Activated naive CD4-positive, alpha-beta T cell treated with anti-CD3 and anti-CD28 coated beads, Interleukin-2, amount 10 ng/mL, durations not matched to agents 7 days and 5 days (primary cell): ENCODE measurements at regions of chr12 and their contacts with region 1.

Region 1: GRCh38 chr12:94101738-94102660 is 46.4 kb upstream of the PLXNC1 start:
- DNase-seq: peak; percentile 92
- H3K4me3 Mint-ChIP-seq: peak overlapping the region; percentile 79
- H3K27ac Mint-ChIP-seq: peak overlapping the region; percentile 89
- H3K4me1 Mint-ChIP-seq: peaks cover 52% of the 10 kb centered on the region
- H3K27me3 Mint-ChIP-seq: peaks cover 9% of the 10 kb centered on the region

Region 2: GRCh38 chr12:92987362-92987761 is 1114.6 kb before region 1 on chr12:
- CTCF ChIA-PET with region 1: interaction called, 22 read pairs
- DNase-seq: no peak
- H3K4me3 Mint-ChIP-seq: no peak overlapping the region
- H3K27ac Mint-ChIP-seq: no peak overlapping the region
- H3K4me1 Mint-ChIP-seq: peaks cover 14% of the 10 kb centered on the region
- H3K27me3 Mint-ChIP-seq: peaks cover 9% of the 10 kb centered on the region

Region 3: GRCh38 chr12:93526786-93527428 is 575.1 kb before region 1 on chr12:
- CTCF ChIA-PET with region 1: interaction called, 11 read pairs
- DNase-seq: no peak
- H3K4me3 Mint-ChIP-seq: no peak overlapping the region
- H3K27ac Mint-ChIP-seq: no peak overlapping the region
- H3K4me1 Mint-ChIP-seq: peaks cover 42% of the 10 kb centered on the region
- H3K27me3 Mint-ChIP-seq: peaks cover 17% of the 10 kb centered on the region

Region 4: GRCh38 chr12:93759512-93760081 is 342.4 kb before region 1 on chr12:
- CTCF ChIA-PET with region 1: interaction called, 200 read pairs
- DNase-seq: no peak
- H3K4me3 Mint-ChIP-seq: no peak overlapping the region
- H3K27ac Mint-ChIP-seq: peak overlapping the region; percentile 50
- H3K4me1 Mint-ChIP-seq: peaks cover 69% of the 10 kb centered on the region
- H3K27me3 Mint-ChIP-seq: peaks cover 15% of the 10 kb centered on the region

Region 5: GRCh38 chr12:93802698-93803423 is 299.1 kb before region 1 on chr12:
- CTCF ChIA-PET with region 1: interaction called, 12 read pairs
- DNase-seq: no peak
- H3K4me3 Mint-ChIP-seq: no peak overlapping the region
- H3K27ac Mint-ChIP-seq: no peak overlapping the region
- H3K4me1 Mint-ChIP-seq: peaks cover 36% of the 10 kb centered on the region
- H3K27me3 Mint-ChIP-seq: no peaks in the 10 kb centered on the region

Region 6: GRCh38 chr12:94091624-94092023 is 10.4 kb before region 1 on chr12:
- CTCF ChIA-PET with region 1: interaction called, 15 read pairs
- DNase-seq: no peak
- H3K4me3 Mint-ChIP-seq: no peak overlapping the region
- H3K27ac Mint-ChIP-seq: no peak overlapping the region
- H3K4me1 Mint-ChIP-seq: no peaks in the 10 kb centered on the region
- H3K27me3 Mint-ChIP-seq: peaks cover 18% of the 10 kb centered on the region

Region 7: GRCh38 chr12:94165163-94165562 is 63.2 kb after region 1 on chr12:
- CTCF ChIA-PET with region 1: no interaction called
- DNase-seq: no peak
- H3K4me3 Mint-ChIP-seq: no peak overlapping the region
- H3K27ac Mint-ChIP-seq: no peak overlapping the region
- H3K4me1 Mint-ChIP-seq: peaks cover 31% of the 10 kb centered on the region
- H3K27me3 Mint-ChIP-seq: no peaks in the 10 kb centered on the region

Region 8: GRCh38 chr12:94532490-94533422 is 430.8 kb after region 1 on chr12:
- CTCF ChIA-PET with region 1: interaction called, 10 read pairs
- DNase-seq: peak; percentile 82
- H3K4me3 Mint-ChIP-seq: no peak overlapping the region
- H3K27ac Mint-ChIP-seq: no peak overlapping the region
- H3K4me1 Mint-ChIP-seq: peaks cover 36% of the 10 kb centered on the region
- H3K27me3 Mint-ChIP-seq: peaks cover 17% of the 10 kb centered on the region